Activated CD4-positive, alpha-beta T cell treated with anti-CD3 and anti-CD28 coated beads, Interleukin-2, amount 10 ng/mL, durations not matched to agents 24 days and 14 days (primary cell): ENCODE measurements at regions of chr19 and their contacts with region 1.

Region 1: DNA sequence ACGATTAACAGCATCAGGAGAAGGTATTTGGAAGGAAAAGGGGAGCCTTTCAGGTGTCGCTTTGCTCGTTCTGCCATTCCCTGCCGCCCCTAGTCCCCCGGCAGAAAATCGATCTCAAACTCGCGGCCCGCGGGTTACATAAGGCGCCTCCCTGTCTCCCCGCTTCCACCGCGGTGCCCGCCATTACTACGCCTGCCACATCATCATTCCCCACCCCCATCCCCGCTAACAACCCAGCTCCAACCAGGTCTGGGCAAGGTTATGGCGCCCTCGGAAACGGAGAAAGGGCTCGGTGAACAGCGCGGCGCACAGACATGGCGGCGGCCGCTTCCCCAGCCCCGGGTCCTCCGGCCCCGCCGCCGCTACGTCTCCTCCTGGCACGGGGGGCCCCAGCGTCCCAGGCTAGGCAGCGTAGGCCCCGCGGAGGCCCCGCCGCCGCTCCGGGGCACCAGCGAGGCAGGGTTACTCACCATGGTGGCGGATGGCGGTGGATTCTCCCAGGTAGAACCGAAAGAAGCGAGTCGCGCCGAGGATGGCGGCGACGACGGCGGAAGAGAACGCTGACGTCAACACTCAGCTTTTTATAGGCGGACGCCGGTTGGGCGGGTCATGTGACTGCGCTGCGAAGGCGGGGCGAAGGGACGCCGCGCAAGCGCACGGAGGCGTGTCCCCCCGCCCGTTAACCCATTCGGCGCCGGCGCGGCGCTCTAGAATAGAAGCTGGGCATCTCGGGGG is at the start of gene EEF2:
- DNase-seq: peak; percentile 97
- H3K4me3 Mint-ChIP-seq: peak within 1 kb of the TSS; percentile 94
- H3K27ac Mint-ChIP-seq: peak within 1 kb of the TSS; percentile 93
- H3K4me1 Mint-ChIP-seq: peaks cover 31% of the 10 kb centered on the region
- H3K27me3 Mint-ChIP-seq: no peaks in the 10 kb centered on the region
- total RNA-seq, gene EEF2: 2,394 and 2,438 TPM in 2 replicates

Region 2: DNA sequence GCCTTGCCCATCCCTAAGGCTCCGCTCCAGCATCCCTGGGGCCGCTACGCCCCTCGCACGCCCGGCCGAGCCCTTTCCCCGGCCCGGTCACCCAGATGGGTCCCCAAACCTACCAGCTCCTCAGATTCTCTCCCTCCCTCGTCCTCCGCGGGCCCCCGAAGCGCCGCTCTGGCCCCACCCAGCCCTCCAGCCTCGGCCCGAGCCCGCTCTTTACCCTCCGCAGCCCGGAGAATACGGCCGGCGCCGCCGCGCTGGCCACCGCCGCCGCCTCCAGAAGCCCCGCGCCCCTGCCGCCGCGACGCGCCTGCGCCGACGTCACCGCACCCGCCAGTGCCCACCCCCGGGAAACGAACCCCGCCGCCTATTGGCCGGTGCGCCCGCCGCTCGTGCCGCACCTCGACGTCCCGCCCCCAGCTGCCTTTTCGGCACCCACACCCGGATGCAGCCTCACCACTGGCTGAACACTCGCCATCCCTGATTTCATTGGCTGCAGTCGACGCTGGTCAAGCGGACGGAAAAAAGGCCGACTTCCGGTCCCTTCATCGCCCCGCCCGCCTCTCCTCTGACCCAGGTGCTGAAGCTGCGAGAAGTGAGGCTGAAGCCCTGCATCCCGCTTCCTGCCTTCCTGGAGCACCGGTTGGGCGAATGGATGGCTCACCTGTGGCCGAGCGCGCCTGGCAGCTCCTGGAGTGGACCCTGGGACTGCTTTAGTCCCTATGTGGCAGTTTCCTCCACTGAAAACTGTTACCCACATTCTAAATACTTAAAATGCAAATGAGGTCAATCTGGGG is 14.1 kb before region 1 on chr19 and contains the start of gene DAPK3:
- intact Hi-C with region 1: loop called (anchors 2 kb)
- DNase-seq: peak; percentile 98
- H3K4me3 Mint-ChIP-seq: peak within 1 kb of the TSS; percentile 94
- H3K27ac Mint-ChIP-seq: peak within 1 kb of the TSS; percentile 83
- H3K4me1 Mint-ChIP-seq: peaks cover 20% of the 10 kb centered on the region
- H3K27me3 Mint-ChIP-seq: no peaks in the 10 kb centered on the region
- total RNA-seq, gene DAPK3: 45.6 and 46.7 TPM in 2 replicates

Region 3: GRCh38 chr19:4035582-4035981 is 50.5 kb after region 1 on chr19:
- intact Hi-C with region 1: no loop called
- DNase-seq: no peak
- H3K4me3 Mint-ChIP-seq: no peak overlapping the region
- H3K27ac Mint-ChIP-seq: no peak overlapping the region
- H3K4me1 Mint-ChIP-seq: peaks cover 1% of the 10 kb centered on the region
- H3K27me3 Mint-ChIP-seq: no peaks in the 10 kb centered on the region

Region 4: DNA sequence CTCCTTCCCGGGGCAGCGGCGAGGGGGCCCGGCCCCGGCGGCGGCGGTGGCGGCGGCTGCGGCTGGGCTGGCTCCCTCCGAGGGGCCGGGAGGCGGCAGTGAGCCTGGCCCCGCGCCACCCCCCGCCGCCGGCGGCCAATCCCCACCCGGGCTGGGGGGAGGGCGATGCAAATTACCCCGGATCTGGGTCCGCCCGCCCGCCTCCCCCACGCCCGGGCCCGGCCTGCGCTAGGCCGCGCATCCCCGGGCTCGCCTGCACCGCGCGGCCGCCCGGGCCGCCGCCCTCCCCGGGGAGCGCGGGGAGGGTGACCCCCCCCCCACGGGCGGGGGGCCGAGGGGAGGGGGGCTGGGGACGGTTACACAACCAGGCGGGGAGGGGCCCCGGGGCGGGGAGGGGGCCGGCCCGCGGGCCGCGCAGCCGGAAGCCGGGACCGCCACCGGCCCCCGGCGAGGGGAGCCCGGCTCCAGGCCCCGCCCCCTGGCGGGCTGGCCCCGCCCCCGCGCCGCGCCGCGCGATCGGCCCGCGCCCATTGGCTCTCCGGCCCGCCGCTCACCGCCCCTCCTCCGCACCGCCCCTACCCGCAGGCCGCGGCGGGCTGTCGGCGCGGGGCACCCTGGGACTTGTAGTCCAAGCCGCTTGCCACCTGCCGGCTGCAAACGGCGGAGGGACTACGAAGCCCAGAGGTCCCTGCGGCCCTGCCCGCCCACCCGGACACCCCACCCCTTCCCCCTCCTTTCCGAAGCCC is 80.5 kb after region 1 on chr19:
- intact Hi-C with region 1: loop called (anchors 2 kb)
- DNase-seq: peak; percentile 99
- H3K4me3 Mint-ChIP-seq: peak overlapping the region; percentile 69
- H3K27ac Mint-ChIP-seq: no peak overlapping the region
- H3K4me1 Mint-ChIP-seq: peaks cover 25% of the 10 kb centered on the region
- H3K27me3 Mint-ChIP-seq: no peaks in the 10 kb centered on the region

Region 5: DNA sequence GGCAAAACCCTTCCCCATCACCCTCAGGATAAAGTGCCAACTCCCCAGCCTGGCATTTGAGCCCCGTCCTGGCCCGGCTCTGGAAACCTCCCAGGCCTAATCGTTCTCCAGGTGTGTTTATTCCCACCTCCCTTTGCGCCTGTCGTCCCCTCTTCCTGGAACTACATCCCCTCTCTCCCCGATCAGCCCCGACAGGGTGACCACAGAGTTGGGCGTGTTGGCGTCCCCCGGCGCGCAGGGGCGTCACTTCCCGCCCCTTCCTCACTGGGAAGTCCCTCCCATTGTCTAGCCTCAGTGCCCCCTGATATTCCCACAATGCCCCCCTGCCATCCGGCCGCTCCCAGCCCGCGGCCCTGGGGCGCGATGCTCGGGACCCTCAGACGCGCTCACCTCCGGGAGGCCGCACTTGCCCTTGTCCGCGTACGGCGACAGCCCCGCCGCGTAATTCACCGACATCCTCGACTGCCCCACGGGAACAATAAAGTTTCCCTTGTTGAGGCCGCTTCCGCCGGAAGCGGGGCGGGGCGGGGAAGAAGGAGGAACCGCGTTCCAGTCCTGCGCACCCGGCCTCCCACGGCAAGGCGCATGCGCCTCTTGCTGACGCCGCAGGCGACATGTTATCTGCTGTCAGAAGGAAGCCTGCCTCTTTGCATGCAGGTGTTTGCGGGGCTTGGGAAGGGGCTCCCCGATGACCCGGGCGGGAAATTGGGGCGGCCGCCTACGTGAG is 197.2 kb after region 1 on chr19 and contains the starts of genes ANKRD24 and SIRT6:
- intact Hi-C with region 1: loop called (anchors 1 kb)
- DNase-seq: peak; percentile 99
- H3K4me3 Mint-ChIP-seq: peak within 1 kb of the TSS; percentile 99
- H3K27ac Mint-ChIP-seq: peak within 1 kb of the TSS; percentile 96
- H3K4me1 Mint-ChIP-seq: peaks cover 40% of the 10 kb centered on the region
- H3K27me3 Mint-ChIP-seq: peaks cover 2% of the 10 kb centered on the region
- total RNA-seq, gene ANKRD24: 0.50 and 0.72 TPM in 2 replicates
- total RNA-seq, gene SIRT6: 39.8 and 48.0 TPM in 2 replicates

Region 6: DNA sequence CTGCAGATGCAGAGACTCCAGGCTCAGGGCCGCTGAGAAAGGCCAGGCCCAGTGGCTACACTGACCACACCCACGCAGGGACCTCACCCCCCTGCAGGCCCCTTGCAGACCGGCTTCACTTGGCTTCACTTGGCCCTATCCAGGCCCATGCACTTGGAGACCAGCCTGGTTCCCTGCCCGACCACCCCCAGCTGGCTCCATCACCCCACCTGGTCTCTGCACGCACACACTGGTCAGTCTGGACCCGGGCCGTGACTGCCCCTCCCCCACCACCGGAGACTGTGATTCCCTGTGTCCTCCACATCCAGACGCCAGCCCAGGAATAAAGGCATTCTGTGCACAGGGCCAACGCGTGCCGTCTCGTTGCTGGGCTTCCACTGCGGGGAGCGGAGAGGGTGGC is 239.4 kb after region 1 on chr19:
- intact Hi-C with region 1: no loop called
- DNase-seq: no peak
- H3K4me3 Mint-ChIP-seq: no peak overlapping the region
- H3K27ac Mint-ChIP-seq: no peak overlapping the region
- H3K4me1 Mint-ChIP-seq: peaks cover 6% of the 10 kb centered on the region
- H3K27me3 Mint-ChIP-seq: no peaks in the 10 kb centered on the region